CD4-positive, alpha-beta T cell (primary cell): ENCODE measurements at regions of chr10 and their contacts with region 1.

Region 1: GRCh38 chr10:110610308-110610774 is 33.8 kb upstream of the RBM20 start:
- DNase-seq: peak; percentile 13 to 79 (median 34)
- ATAC-seq: peak; percentile 72
- H3K4me3 ChIP-seq: no peak overlapping the region
- H3K4me3 Mint-ChIP-seq: no peak overlapping the region
- H3K27ac ChIP-seq: no peak overlapping the region
- H3K27ac Mint-ChIP-seq: no peak overlapping the region
- H3K4me1 ChIP-seq: no peaks in the 10 kb centered on the region
- H3K4me1 Mint-ChIP-seq: no peaks in the 10 kb centered on the region
- H3K27me3 ChIP-seq: no peaks in the 10 kb centered on the region
- H3K27me3 Mint-ChIP-seq: no peaks in the 10 kb centered on the region
- CTCF ChIP-seq: peak; percentile 93

Region 2: DNA sequence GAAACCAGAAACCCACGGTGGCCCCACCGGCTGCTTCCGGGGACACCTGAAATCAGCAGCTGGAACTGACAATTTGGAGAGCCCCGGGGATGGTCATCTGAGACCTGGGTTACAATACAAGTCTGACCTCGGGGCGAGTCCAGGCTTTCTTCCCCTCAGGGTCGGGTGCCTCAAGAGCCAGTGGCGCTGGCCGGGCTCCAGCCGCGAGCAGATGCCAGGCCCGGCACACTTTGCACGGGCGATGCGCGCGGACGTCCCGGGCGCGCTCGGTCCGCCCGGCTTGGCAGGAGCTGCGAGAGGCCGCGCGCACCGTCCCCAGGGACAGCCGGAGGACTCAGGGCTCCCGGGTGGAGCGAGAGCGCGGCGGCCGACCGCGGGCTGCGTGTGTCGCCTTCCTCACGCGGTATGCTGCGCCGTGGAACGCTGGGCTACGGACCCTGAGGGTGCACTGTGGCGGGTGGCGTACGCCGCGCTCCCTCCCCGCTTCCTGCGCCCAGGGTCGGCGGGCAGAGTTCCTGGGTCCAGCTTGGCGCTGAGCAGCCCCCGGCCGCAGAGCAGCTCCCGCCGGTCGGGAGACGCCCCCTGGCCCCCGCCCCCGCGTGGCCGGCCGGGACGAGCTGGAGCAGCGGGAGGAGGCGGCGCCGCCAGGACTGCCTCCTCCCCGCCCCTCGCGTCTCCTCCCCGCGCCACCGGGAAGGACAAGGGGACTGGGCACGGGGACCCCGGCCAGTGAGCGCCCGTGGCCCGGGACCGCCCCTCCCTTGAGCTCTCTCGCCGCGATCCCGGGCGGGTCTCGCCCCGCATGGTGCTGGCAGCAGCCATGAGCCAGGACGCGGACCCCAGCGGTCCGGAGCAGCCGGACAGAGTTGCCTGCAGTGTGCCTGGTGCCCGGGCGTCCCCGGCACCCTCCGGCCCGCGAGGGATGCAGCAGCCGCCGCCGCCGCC is 33.6 kb after region 1 on chr10 and contains the start of gene RBM20:
- CTCF ChIA-PET with region 1: no interaction called
- POLR2A ChIA-PET with region 1: no interaction called
- intact Hi-C with region 1: no loop called
- DNase-seq: peak in 7 of 14 experiments; percentile 6 to 38 (median 13)
- ATAC-seq: peak; percentile 63
- H3K4me3 ChIP-seq: peak within 1 kb of the TSS; percentile 53
- H3K4me3 Mint-ChIP-seq: peak within 1 kb of the TSS; percentile 83
- H3K27ac ChIP-seq: no peak within 1 kb of the TSS
- H3K27ac Mint-ChIP-seq: no peak within 1 kb of the TSS
- H3K4me1 ChIP-seq: peaks cover 29% of the 10 kb centered on the region
- H3K4me1 Mint-ChIP-seq: peaks cover 39% of the 10 kb centered on the region
- H3K27me3 ChIP-seq: peaks cover 43 to 68% of the 10 kb centered on the region in 2 experiments
- H3K27me3 Mint-ChIP-seq: peaks cover 76% of the 10 kb centered on the region
- CTCF ChIP-seq: no peak
- total RNA-seq, gene RBM20: 0.91 to 1.1 TPM

Region 3: GRCh38 chr10:110893559-110894179 is 283.3 kb after region 1 on chr10:
- CTCF ChIA-PET with region 1: no interaction called
- POLR2A ChIA-PET with region 1: no interaction called
- intact Hi-C with region 1: loop called (anchors 1 to 5 kb)
- DNase-seq: peak in 4 of 14 experiments; percentile 10 to 77 (median 74)
- ATAC-seq: peak; percentile 74
- H3K4me3 ChIP-seq: no peak overlapping the region
- H3K4me3 Mint-ChIP-seq: peak overlapping the region; percentile 6
- H3K27ac ChIP-seq: no peak overlapping the region
- H3K27ac Mint-ChIP-seq: peak overlapping the region; percentile 51
- H3K4me1 ChIP-seq: no peaks in the 10 kb centered on the region
- H3K4me1 Mint-ChIP-seq: peaks cover 61% of the 10 kb centered on the region
- H3K27me3 ChIP-seq: no peaks in the 10 kb centered on the region
- H3K27me3 Mint-ChIP-seq: no peaks in the 10 kb centered on the region
- CTCF ChIP-seq: peak; percentile 79

Region 4: GRCh38 chr10:111018021-111018420 is 407.7 kb after region 1 on chr10:
- CTCF ChIA-PET with region 1: no interaction called
- POLR2A ChIA-PET with region 1: no interaction called
- intact Hi-C with region 1: loop called in 1 of 2 experiments (anchors 10 kb)
- DNase-seq: no peak
- ATAC-seq: no peak
- H3K4me3 ChIP-seq: no peak overlapping the region
- H3K4me3 Mint-ChIP-seq: no peak overlapping the region
- H3K27ac ChIP-seq: no peak overlapping the region
- H3K27ac Mint-ChIP-seq: no peak overlapping the region
- H3K4me1 ChIP-seq: no peaks in the 10 kb centered on the region
- H3K4me1 Mint-ChIP-seq: peaks cover 16% of the 10 kb centered on the region
- H3K27me3 ChIP-seq: no peaks in the 10 kb centered on the region
- H3K27me3 Mint-ChIP-seq: no peaks in the 10 kb centered on the region
- CTCF ChIP-seq: no peak

Region 5: GRCh38 chr10:111199587-111199986 is 589.2 kb after region 1 on chr10:
- CTCF ChIA-PET with region 1: no interaction called
- POLR2A ChIA-PET with region 1: no interaction called
- intact Hi-C with region 1: loop called in 1 of 2 experiments (anchors 10 kb)
- DNase-seq: no peak
- ATAC-seq: no peak
- H3K4me3 ChIP-seq: no peak overlapping the region
- H3K4me3 Mint-ChIP-seq: no peak overlapping the region
- H3K27ac ChIP-seq: no peak overlapping the region
- H3K27ac Mint-ChIP-seq: no peak overlapping the region
- H3K4me1 ChIP-seq: no peaks in the 10 kb centered on the region
- H3K4me1 Mint-ChIP-seq: no peaks in the 10 kb centered on the region
- H3K27me3 ChIP-seq: peaks cover 0 to 7% of the 10 kb centered on the region in 2 experiments
- H3K27me3 Mint-ChIP-seq: peaks cover 34% of the 10 kb centered on the region
- CTCF ChIP-seq: no peak

Region 6: DNA sequence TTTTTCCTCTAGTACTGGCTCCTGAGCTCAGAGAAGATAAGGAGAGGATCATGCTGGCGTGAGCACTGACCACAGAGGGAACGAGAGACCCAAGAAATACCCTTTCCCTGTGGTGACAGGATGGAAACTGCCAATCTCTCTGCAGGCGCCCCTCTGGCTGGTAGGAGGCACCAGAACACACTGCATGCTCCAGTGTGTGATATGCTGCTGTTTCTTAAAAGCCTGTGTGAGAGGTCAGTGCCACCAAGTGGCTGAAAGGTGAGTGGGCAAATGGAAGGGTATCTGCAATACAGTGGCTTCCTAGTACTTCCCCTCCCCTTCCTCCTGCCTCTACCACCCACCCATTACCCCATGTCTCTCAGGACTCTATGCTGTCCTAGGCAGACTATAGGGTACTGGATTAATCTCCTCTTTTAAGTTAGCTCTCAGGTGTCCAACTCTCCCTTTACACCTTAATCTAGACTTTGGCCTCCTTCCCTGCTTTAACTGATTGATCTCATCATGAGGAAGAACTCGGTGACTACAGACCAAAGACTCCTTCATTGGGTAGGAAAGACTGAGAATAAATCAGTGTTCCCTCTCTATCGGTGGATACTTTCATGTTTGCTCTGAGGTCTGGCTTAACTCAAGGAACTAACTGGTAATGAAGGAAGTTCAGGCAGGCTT is 750.1 kb after region 1 on chr10:
- CTCF ChIA-PET with region 1: no interaction called
- POLR2A ChIA-PET with region 1: no interaction called
- intact Hi-C with region 1: loop called (anchors 5 to 10 kb)
- DNase-seq: peak in 6 of 14 experiments; percentile 0 to 40 (median 10)
- ATAC-seq: no peak
- H3K4me3 ChIP-seq: no peak overlapping the region
- H3K4me3 Mint-ChIP-seq: no peak overlapping the region
- H3K27ac ChIP-seq: no peak overlapping the region
- H3K27ac Mint-ChIP-seq: no peak overlapping the region
- H3K4me1 ChIP-seq: no peaks in the 10 kb centered on the region
- H3K4me1 Mint-ChIP-seq: no peaks in the 10 kb centered on the region
- H3K27me3 ChIP-seq: peaks cover 0 to 18% of the 10 kb centered on the region in 2 experiments
- H3K27me3 Mint-ChIP-seq: peaks cover 31% of the 10 kb centered on the region
- CTCF ChIP-seq: no peak

Region 7: DNA sequence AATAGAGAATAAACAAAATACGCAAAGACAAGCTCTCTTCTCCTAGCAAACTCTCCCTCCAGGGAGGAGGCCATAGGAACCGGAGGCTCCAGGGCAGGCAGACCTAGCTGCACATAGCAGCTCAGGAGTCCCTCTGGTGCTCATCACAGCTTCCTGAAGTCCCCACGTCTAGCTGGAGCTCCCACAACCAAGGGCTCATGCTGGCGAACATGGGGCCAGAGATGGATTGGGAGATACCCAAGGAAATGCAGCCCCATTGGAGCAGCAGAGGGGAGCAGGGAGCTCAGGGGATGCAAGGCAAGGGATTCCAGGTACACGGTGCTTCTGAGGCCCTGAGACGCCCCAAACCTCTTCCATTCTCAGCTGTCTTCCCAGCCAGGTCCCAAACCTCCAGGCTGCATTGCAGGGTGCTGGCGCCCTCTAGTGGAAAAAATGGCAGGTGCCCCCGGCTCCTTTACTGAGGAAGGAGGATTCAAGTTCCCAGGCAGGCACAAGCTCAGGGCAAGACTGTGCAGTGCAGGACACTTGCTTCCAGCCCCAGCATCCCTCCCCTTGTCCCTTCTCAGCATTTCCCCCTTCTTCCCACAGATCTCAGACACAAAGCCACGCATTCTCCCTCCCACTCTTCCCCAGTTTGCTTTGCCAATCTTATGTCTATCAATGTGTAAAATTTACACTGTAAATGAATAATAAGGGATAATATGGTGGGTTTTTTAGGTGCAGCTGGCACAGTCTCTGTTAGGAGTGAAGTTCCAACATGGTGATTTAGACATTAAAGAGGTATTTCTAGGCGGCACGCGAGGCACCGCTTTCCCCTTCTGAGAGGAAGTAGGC is 1527.0 kb after region 1 on chr10:
- CTCF ChIA-PET with region 1: no interaction called
- POLR2A ChIA-PET with region 1: no interaction called
- intact Hi-C with region 1: loop called (anchors 2 to 5 kb)
- DNase-seq: peak; percentile 32 to 66 (median 47)
- ATAC-seq: peak; percentile 46
- H3K4me3 ChIP-seq: no peak overlapping the region
- H3K4me3 Mint-ChIP-seq: no peak overlapping the region
- H3K27ac ChIP-seq: no peak overlapping the region
- H3K27ac Mint-ChIP-seq: no peak overlapping the region
- H3K4me1 ChIP-seq: peaks cover 4% of the 10 kb centered on the region
- H3K4me1 Mint-ChIP-seq: no peaks in the 10 kb centered on the region
- H3K27me3 ChIP-seq: no peaks in the 10 kb centered on the region
- H3K27me3 Mint-ChIP-seq: no peaks in the 10 kb centered on the region
- CTCF ChIP-seq: peak; percentile 77